Activated CD8-positive, alpha-beta memory T cell treated with anti-CD3 and anti-CD28 coated beads, Interleukin-2, amount 10 ng/mL, durations not matched to agents 7 days and 5 days (primary cell): ENCODE measurements at regions of chr1 and their contacts with region 1.

Region 1: GRCh38 chr1:205523891-205524793 is 19.7 kb downstream of the CDK18 start:
- DNase-seq: peak; percentile 79
- ATAC-seq: peak; percentile 67
- H3K4me3 Mint-ChIP-seq: no peak overlapping the region
- H3K27ac Mint-ChIP-seq: no peak overlapping the region
- H3K4me1 Mint-ChIP-seq: no peaks in the 10 kb centered on the region
- H3K27me3 Mint-ChIP-seq: peaks cover 3% of the 10 kb centered on the region

Region 2: GRCh38 chr1:205273551-205273982 is 250.6 kb before region 1 on chr1:
- CTCF ChIA-PET with region 1: interaction called, 31 read pairs
- DNase-seq: peak; percentile 88
- ATAC-seq: peak; percentile 88
- H3K4me3 Mint-ChIP-seq: no peak overlapping the region
- H3K27ac Mint-ChIP-seq: peak overlapping the region; percentile 40
- H3K4me1 Mint-ChIP-seq: peaks cover 10% of the 10 kb centered on the region
- H3K27me3 Mint-ChIP-seq: peaks cover 8% of the 10 kb centered on the region

Region 3: GRCh38 chr1:205354259-205354904 is 169.8 kb before region 1 on chr1:
- CTCF ChIA-PET with region 1: interaction called, 53 read pairs
- DNase-seq: peak; percentile 74
- ATAC-seq: peak; percentile 72
- H3K4me3 Mint-ChIP-seq: no peak overlapping the region
- H3K27ac Mint-ChIP-seq: no peak overlapping the region
- H3K4me1 Mint-ChIP-seq: no peaks in the 10 kb centered on the region
- H3K27me3 Mint-ChIP-seq: peaks cover 23% of the 10 kb centered on the region

Region 4: DNA sequence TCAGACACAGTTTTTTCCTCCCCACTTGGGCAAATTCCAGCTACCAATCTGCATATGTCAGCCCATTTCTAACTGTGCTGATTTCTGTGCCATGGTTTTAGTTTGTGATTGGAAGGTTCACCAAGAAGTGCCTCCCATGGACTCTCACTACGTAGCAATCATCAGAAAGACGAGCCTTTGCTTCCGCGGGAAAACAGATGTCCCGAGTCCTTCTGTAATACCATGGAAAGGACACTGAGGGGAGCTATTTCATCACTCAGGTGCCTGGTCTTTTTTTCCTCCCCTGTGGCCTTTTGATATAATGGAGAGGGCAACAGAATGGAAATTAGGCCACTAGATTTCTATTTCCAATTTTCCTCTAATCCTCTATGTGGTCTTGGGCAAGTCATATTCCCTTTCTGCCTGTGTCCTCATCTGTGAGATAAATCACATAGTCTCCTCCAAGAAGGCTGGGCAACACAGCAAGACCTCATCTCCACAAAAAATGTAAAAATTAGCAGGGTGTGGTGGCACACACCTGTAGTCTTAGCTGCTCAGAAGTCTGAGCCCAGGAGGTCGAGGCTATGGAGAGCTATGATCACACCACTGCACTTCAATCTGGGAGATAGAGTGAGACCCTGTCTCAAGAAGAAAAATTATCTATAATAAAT is 127.0 kb before region 1 on chr1:
- CTCF ChIA-PET with region 1: interaction called, 60 read pairs
- DNase-seq: no peak
- ATAC-seq: no peak
- H3K4me3 Mint-ChIP-seq: no peak overlapping the region
- H3K27ac Mint-ChIP-seq: no peak overlapping the region
- H3K4me1 Mint-ChIP-seq: no peaks in the 10 kb centered on the region
- H3K27me3 Mint-ChIP-seq: peaks cover 31% of the 10 kb centered on the region

Region 5: DNA sequence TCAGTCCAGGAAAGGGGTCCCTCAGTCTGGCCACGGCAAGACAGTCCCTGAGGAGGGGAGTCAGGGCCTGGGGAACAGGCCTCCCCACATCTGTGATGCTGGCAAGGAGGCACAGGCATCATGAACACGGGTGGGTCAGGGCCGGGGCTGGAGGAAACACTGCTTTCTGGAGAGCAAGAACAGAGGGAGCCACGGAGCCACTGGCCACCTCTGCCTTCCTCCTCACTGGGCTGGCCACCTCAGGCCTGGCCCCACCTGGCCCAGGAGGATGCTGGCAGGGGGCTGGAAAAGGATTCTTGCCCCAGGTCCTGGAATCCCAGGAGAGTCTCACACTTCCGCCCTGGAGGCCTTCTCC is 84.0 kb before region 1 on chr1:
- CTCF ChIA-PET with region 1: no interaction called
- DNase-seq: no peak
- ATAC-seq: no peak
- H3K4me3 Mint-ChIP-seq: peak overlapping the region; percentile 71
- H3K27ac Mint-ChIP-seq: peak overlapping the region; percentile 95
- H3K4me1 Mint-ChIP-seq: peaks cover 31% of the 10 kb centered on the region
- H3K27me3 Mint-ChIP-seq: peaks cover 9% of the 10 kb centered on the region

Region 6: GRCh38 chr1:205512059-205513045 is 11.8 kb before region 1 on chr1:
- CTCF ChIA-PET with region 1: interaction called, 24 read pairs
- DNase-seq: no peak
- ATAC-seq: no peak
- H3K4me3 Mint-ChIP-seq: no peak overlapping the region
- H3K27ac Mint-ChIP-seq: no peak overlapping the region
- H3K4me1 Mint-ChIP-seq: peaks cover 5% of the 10 kb centered on the region
- H3K27me3 Mint-ChIP-seq: no peaks in the 10 kb centered on the region

Region 7: GRCh38 chr1:205542367-205542766 is 18.2 kb after region 1 on chr1:
- CTCF ChIA-PET with region 1: interaction called, 22 read pairs
- DNase-seq: peak; percentile 36
- ATAC-seq: no peak
- H3K4me3 Mint-ChIP-seq: no peak overlapping the region
- H3K27ac Mint-ChIP-seq: no peak overlapping the region
- H3K4me1 Mint-ChIP-seq: peaks cover 9% of the 10 kb centered on the region
- H3K27me3 Mint-ChIP-seq: peaks cover 58% of the 10 kb centered on the region

Region 8: GRCh38 chr1:205719762-205720161 is 195.6 kb after region 1 on chr1:
- CTCF ChIA-PET with region 1: no interaction called
- DNase-seq: no peak
- ATAC-seq: peak; percentile 42
- H3K4me3 Mint-ChIP-seq: no peak overlapping the region
- H3K27ac Mint-ChIP-seq: peak overlapping the region; percentile 58
- H3K4me1 Mint-ChIP-seq: peaks cover 24% of the 10 kb centered on the region
- H3K27me3 Mint-ChIP-seq: no peaks in the 10 kb centered on the region

Region 9: DNA sequence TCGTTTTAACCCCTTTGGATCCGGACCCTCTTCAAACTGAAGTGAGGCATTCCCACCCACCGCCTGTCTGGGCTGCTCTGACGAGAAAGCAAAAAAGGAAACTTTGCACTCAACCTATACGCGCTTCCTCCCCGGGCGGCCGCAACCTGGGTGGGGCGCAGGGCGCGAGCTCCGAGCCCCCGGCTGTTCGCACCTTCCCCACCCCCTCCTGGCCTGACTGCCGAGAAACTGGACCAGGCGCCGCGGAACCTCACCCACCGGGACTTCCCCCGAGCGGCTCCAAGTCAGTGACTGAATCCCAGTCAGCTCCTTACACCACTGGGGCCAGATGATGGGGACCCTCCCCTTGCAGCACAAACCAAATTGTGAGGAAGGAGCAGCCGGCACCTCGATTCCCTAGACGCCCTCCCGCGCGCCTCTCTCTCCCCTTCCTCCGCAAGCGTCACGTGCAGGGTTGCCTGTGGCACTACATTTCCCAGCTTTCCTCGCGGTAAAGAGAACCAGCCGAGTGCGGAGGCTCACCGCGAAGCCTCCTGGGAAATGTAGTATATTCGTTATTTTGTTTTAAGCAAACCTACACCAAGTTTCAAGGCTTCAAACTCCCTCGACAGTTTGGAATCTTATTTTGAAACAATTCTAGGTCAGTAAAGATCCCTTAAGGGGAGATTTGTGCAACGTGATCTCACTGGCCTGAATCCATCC is 251.0 kb after region 1 on chr1 and contains the start of gene RAB29:
- CTCF ChIA-PET with region 1: no interaction called
- DNase-seq: peak; percentile 94
- ATAC-seq: peak; percentile 94
- H3K4me3 Mint-ChIP-seq: peak within 1 kb of the TSS; percentile 89
- H3K27ac Mint-ChIP-seq: peak within 1 kb of the TSS; percentile 93
- H3K4me1 Mint-ChIP-seq: peaks cover 46% of the 10 kb centered on the region
- H3K27me3 Mint-ChIP-seq: no peaks in the 10 kb centered on the region
- total RNA-seq, gene RAB29: 51.0 to 61.4 TPM